ENCODE measurements at regions of chr12 and their contacts with region 1.

Region 1: GRCh38 chr12:48851883-48852733 is at the start of gene DDX23:
- DNase-seq: peak; percentile 96
- ATAC-seq: peak; percentile 96
- H3K4me3 Mint-ChIP-seq: peak within 1 kb of the TSS; percentile 97
- H3K27ac Mint-ChIP-seq: peak within 1 kb of the TSS; percentile 96
- H3K4me1 Mint-ChIP-seq: peaks cover 27% of the 10 kb centered on the region
- H3K27me3 Mint-ChIP-seq: no peaks in the 10 kb centered on the region
- CTCF ChIP-seq: no peak
- total RNA-seq, gene DDX23: 84.5 to 95.6 TPM

Region 2: GRCh38 chr12:48865434-48866290 is 13.6 kb after region 1 on chr12 and contains the start of gene RND1:
- CTCF ChIA-PET with region 1: interaction called, 103 read pairs
- POLR2A ChIA-PET with region 1: interaction called, 56 read pairs
- intact Hi-C with region 1: no loop called
- DNase-seq: peak; percentile 91
- ATAC-seq: peak; percentile 94
- H3K4me3 Mint-ChIP-seq: peak within 1 kb of the TSS; percentile 84
- H3K27ac Mint-ChIP-seq: peak within 1 kb of the TSS; percentile 79
- H3K4me1 Mint-ChIP-seq: peaks cover 21% of the 10 kb centered on the region
- H3K27me3 Mint-ChIP-seq: peaks cover 24% of the 10 kb centered on the region
- CTCF ChIP-seq: no peak
- total RNA-seq, gene RND1: 2.3 to 3.2 TPM

Region 3: DNA sequence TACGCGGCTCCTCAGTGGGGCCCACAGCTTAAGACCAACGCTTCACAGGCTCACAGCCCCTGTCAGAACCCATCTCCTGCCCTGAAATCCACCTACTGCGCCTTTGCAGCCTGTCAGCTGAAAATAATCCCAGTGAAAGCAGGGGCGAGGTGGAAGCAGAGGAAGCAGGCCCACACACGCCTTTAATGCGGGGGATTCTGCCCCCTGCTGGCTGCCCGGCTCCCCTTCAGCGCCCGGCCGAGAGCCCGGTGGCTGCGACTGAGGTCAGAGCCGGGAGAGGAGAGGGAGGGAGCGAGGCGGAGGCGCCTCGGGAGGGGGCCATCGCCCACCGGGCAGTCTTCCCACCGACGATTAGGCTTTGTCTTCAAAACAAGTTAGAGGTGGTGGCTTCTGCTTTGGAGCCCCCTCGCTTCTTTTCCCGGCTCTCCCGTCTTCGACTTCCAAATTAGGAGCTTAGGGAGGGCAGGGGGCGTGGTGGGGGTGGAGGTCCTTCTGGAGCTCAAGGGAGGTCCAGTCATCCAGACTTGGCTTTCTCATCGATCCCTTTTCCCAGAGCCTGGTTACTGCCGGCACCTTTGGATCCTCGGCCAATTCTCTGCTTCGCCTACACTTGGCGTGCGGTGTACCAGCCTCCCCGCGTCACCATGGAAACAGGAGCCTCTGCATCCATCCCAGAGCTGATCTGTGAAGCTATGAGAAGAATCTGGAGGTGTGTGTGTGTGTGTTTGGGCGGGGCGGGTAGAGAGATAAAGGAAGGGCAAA is 38.7 kb after region 1 on chr12:
- CTCF ChIA-PET with region 1: interaction called, 294 read pairs
- POLR2A ChIA-PET with region 1: interaction called, 13 read pairs
- intact Hi-C with region 1: loop called (anchors 1 kb)
- DNase-seq: peak; percentile 86
- ATAC-seq: peak; percentile 97
- H3K4me3 Mint-ChIP-seq: no peak overlapping the region
- H3K27ac Mint-ChIP-seq: no peak overlapping the region
- H3K4me1 Mint-ChIP-seq: no peaks in the 10 kb centered on the region
- H3K27me3 Mint-ChIP-seq: peaks cover 7% of the 10 kb centered on the region
- CTCF ChIP-seq: peak; percentile 98

Region 4: GRCh38 chr12:48936379-48936979 is 84.4 kb after region 1 on chr12:
- CTCF ChIA-PET with region 1: interaction called, 54 read pairs
- POLR2A ChIA-PET with region 1: interaction called, 3 read pairs
- intact Hi-C with region 1: loop called (anchors 2 kb)
- DNase-seq: peak; percentile 92
- ATAC-seq: peak; percentile 79
- H3K4me3 Mint-ChIP-seq: no peak overlapping the region
- H3K27ac Mint-ChIP-seq: no peak overlapping the region
- H3K4me1 Mint-ChIP-seq: peaks cover 24% of the 10 kb centered on the region
- H3K27me3 Mint-ChIP-seq: no peaks in the 10 kb centered on the region
- CTCF ChIP-seq: peak; percentile 86

Region 5: DNA sequence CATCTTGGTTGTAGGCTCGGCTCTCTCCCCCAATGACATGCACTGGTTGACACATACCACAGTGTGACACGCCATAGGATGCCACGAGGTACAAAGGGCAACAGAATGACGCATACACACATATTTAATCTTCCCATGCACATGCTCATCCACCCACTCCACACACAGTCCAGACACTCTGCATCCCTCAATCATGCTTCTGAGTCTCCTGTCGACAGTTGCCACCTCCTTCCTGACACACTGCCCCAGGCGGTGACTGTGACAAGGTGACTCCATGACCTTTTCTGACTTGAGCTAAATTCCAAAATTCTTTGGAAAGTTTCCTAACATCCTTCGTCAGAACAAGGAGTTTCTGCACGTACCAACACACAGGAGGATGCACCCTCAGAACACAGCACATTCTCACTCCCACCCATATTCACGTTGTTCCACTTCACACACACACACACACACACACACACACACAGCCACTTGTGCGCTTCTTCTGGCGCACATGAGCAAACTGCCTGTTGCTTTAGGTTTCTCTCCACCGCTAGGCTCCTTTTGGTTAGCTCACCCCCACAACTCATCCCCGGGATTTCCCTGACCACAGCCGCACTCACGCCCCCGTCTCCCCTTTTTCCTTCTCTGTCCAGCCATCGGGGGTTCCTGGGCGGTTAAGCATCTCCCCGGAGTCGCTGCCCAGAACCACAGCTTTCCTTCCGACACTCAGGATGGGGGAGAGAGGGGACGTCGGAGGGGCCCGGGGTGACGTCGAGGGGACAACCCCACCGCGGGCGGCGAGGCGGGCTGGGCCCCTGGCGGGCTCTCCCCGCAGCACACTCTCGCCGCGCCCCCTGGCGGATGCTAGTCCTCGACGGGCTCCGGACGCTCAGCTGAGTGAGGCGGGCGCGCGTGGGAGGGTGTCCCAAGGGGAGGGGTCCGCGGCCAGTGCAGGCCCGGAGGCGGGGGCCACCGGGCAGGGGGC is 125.5 kb after region 1 on chr12:
- CTCF ChIA-PET with region 1: interaction called, 47 read pairs
- POLR2A ChIA-PET with region 1: interaction called, 3 read pairs
- intact Hi-C with region 1: loop called (anchors 5 kb)
- DNase-seq: peak; percentile 88
- ATAC-seq: peak; percentile 60
- H3K4me3 Mint-ChIP-seq: peak overlapping the region; percentile 3
- H3K27ac Mint-ChIP-seq: peak overlapping the region; percentile 51
- H3K4me1 Mint-ChIP-seq: peaks cover 52% of the 10 kb centered on the region
- H3K27me3 Mint-ChIP-seq: peaks cover 63% of the 10 kb centered on the region
- CTCF ChIP-seq: peak; percentile 97

Region 6: GRCh38 chr12:49264738-49265515 is 412.8 kb after region 1 on chr12 and contains the start of gene TUBA1C:
- CTCF ChIA-PET with region 1: no interaction called
- POLR2A ChIA-PET with region 1: no interaction called
- intact Hi-C with region 1: no loop called
- DNase-seq: peak; percentile 92
- ATAC-seq: peak; percentile 90
- H3K4me3 Mint-ChIP-seq: peak within 1 kb of the TSS; percentile 95
- H3K27ac Mint-ChIP-seq: peak within 1 kb of the TSS; percentile 98
- H3K4me1 Mint-ChIP-seq: peaks cover 38% of the 10 kb centered on the region
- H3K27me3 Mint-ChIP-seq: peaks cover 1% of the 10 kb centered on the region
- CTCF ChIP-seq: no peak
- total RNA-seq, gene TUBA1C: 237 to 240 TPM

Region 7: DNA sequence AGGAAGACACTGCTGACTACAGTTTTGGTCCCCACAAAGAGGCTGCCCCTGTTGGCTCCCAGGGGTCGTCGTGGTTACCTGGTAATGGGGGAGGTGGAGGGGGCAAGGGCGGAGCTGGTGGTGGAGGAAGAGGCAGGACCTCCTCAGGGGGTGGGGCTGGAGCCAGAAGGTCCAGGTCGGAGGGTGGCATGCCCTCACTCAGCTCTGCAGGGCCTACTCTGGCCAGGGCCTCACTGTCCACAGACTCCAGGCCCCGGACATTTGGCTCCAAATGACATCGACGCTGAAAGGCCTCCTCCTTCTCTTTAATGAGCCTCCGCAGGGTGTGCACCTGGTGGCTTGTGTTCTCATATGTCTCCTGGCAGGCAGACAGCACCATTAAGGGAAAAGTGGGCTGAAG is 799.7 kb after region 1 on chr12:
- CTCF ChIA-PET with region 1: no interaction called
- POLR2A ChIA-PET with region 1: no interaction called
- intact Hi-C with region 1: no loop called
- DNase-seq: no peak
- ATAC-seq: no peak
- H3K4me3 Mint-ChIP-seq: no peak overlapping the region
- H3K27ac Mint-ChIP-seq: no peak overlapping the region
- H3K4me1 Mint-ChIP-seq: peaks cover 12% of the 10 kb centered on the region
- H3K27me3 Mint-ChIP-seq: no peaks in the 10 kb centered on the region
- CTCF ChIP-seq: no peak